ENCODE measurements at regions of chr15 and their contacts with region 1.

Region 1: GRCh38 chr15:64731012-64731806 is 44.2 kb downstream of the RBPMS2 start:
- DNase-seq: peak; percentile 82 to 92 (median 91)
- H3K4me3 ChIP-seq: no peak overlapping the region
- H3K27ac ChIP-seq: no peak overlapping the region
- H3K4me1 ChIP-seq: no peaks in the 10 kb centered on the region
- H3K27me3 ChIP-seq: no peaks in the 10 kb centered on the region
- CTCF ChIP-seq: peak; percentile 90 to 94 (median 91)
- EP300 ChIP-seq: no peak
- POLR2A ChIP-seq: no peak

Region 2: GRCh38 chr15:64209680-64210334 is 521.4 kb before region 1 on chr15:
- intact Hi-C with region 1: loop called in 1 of 4 experiments (anchors 5 kb)
- DNase-seq: no peak
- H3K4me3 ChIP-seq: no peak overlapping the region
- H3K27ac ChIP-seq: no peak overlapping the region
- H3K4me1 ChIP-seq: no peaks in the 10 kb centered on the region
- H3K27me3 ChIP-seq: no peaks in the 10 kb centered on the region
- CTCF ChIP-seq: peak in 1 of 3 donors; percentile 42
- EP300 ChIP-seq: no peak
- POLR2A ChIP-seq: no peak

Region 3: GRCh38 chr15:64681424-64682024 is 49.7 kb before region 1 on chr15:
- intact Hi-C with region 1: loop called in 3 of 4 experiments (anchors 2 kb)
- DNase-seq: peak in 1 of 5 donors; percentile 48
- H3K4me3 ChIP-seq: no peak overlapping the region
- H3K27ac ChIP-seq: no peak overlapping the region
- H3K4me1 ChIP-seq: peaks cover 4% of the 10 kb centered on the region
- H3K27me3 ChIP-seq: no peaks in the 10 kb centered on the region
- CTCF ChIP-seq: peak in 2 of 3 donors; percentile 60 to 65
- EP300 ChIP-seq: no peak
- POLR2A ChIP-seq: no peak

Region 4: DNA sequence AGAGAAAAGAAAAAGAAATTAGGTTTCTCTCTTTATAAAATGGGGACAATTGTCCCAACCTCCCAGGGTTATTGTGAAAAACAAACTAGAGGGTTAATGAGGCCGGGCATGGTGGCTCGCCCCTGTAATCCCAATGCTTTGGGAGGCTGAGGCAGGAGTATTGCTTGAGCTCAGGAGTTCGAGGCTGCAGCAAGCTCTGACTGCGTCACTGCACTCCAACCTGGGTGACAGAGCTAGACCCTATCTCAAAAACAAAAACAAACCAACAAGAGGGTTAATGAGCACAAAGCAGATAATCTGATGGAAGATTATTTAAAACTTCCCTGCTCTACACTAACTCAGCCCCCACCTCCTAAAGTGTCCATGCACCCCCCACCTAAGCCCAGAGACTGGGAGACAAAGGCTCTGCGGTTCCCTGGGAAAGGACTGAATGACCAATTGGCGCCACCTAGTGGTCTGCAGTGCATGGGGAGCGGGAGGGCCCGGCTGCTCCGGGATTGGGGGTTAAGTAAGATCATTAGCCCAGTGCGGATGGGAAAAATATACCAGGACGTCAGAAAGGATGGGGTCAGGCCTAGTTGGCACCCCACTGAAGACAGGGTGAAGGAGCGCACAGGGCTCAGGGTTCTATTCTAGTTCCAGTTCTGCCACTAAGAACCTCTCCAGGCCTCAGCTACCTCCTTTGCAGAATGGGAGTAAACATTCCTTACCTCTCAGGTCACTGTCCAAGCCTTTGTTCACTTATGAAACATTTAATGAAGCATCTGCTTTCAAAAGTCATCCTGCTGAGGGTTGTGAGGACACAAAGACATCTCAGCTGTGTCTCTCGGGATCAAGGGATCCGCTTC is 78.7 kb after region 1 on chr15:
- intact Hi-C with region 1: loop called (anchors 2 to 5 kb)
- DNase-seq: peak; percentile 83 to 91 (median 90)
- H3K4me3 ChIP-seq: no peak overlapping the region
- H3K27ac ChIP-seq: no peak overlapping the region
- H3K4me1 ChIP-seq: peaks cover 4% of the 10 kb centered on the region
- H3K27me3 ChIP-seq: no peaks in the 10 kb centered on the region
- CTCF ChIP-seq: peak; percentile 66 to 87 (median 86)
- EP300 ChIP-seq: no peak
- POLR2A ChIP-seq: no peak

Region 5: GRCh38 chr15:65032801-65033537 is 301.8 kb after region 1 on chr15:
- intact Hi-C with region 1: loop called in 1 of 4 experiments (anchors 10 kb)
- DNase-seq: peak in 2 of 5 donors; percentile 43 to 57
- H3K4me3 ChIP-seq: no peak overlapping the region
- H3K27ac ChIP-seq: no peak overlapping the region
- H3K4me1 ChIP-seq: peaks cover 5% of the 10 kb centered on the region
- H3K27me3 ChIP-seq: no peaks in the 10 kb centered on the region
- CTCF ChIP-seq: peak in 1 of 3 donors; percentile 18
- EP300 ChIP-seq: no peak
- POLR2A ChIP-seq: no peak

Region 6: DNA sequence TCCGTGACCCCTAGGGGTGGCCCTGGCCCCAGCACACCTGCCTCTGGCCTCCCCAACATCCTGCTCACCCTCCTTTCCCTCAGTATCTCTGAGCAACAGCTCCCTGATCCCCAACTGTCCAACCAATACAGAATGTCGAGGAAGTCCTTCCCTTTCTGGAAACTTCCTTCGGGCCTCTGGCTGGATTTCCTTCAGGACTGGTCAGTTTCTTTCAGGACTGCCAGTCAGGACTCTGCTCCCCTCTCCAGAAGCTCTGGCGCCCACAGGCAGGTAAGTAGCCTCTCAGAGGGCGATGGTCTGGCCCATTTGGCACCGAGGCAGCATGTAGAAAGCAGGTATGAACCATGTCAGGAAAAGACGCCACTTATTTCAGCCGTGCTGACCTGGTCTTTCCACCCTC is 1471.3 kb after region 1 on chr15:
- intact Hi-C with region 1: no loop called
- DNase-seq: no peak
- H3K4me3 ChIP-seq: no peak overlapping the region
- H3K27ac ChIP-seq: no peak overlapping the region
- H3K4me1 ChIP-seq: no peaks in the 10 kb centered on the region
- H3K27me3 ChIP-seq: no peaks in the 10 kb centered on the region
- CTCF ChIP-seq: no peak
- EP300 ChIP-seq: no peak
- POLR2A ChIP-seq: no peak

Measured in ovary (tissue), 10 donors.